Mammary epithelial cell (primary cell): ENCODE measurements at regions of chrX and their contacts with region 1.

Region 1: DNA sequence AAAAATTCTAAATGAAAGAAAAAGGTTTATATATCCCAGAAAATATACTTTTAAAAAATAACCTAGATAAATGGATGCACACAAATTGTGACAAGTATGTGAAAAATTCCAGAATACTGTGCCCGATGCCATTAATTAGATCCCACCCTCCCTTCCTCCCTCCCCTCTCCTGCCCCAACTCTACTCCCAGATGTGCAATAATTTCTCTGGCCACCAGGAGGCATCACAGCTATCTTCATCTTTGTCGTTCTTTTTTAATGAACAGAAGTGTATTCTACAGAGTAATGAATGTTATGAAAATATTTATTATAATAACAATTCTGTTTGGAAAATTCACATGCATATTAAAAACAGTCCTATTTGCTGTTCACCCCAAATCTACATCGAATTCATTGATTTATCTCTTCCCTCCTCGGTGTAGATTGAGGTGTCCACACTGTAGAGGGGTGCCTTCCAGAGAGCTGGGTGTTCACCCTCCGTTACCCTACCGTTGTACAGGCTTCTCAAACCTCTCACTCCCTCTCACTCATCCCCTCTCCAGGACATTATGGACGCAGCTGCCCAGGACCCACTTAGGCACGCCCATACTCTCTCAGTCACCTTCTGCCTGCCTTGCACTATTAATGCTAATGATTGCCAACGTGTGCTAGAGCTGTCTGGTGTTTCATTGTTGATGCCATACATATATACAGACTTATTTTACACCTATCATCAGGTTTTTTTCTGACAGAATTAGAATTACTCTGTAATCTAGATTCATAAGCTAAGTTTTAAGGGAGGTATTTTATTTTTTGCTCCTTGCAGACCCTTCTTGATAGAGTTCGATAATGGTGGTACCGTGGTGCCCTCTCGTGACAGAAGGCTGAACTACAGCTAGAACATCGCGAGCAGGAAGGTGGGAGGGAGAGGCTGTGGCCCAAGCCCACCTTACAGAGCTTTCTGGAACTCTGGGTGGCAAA is 14.1 kb downstream of the RAB40AL start:
- DNase-seq: peak; percentile 26
- H3K4me3 ChIP-seq: peak overlapping the region; percentile 2 to 11 (median 4)
- H3K27ac ChIP-seq: no peak overlapping the region
- H3K4me1 ChIP-seq: peaks cover 6% of the 10 kb centered on the region
- H3K27me3 ChIP-seq: no peaks in the 10 kb centered on the region
- CTCF ChIP-seq: peak; percentile 59 to 72

Region 2: DNA sequence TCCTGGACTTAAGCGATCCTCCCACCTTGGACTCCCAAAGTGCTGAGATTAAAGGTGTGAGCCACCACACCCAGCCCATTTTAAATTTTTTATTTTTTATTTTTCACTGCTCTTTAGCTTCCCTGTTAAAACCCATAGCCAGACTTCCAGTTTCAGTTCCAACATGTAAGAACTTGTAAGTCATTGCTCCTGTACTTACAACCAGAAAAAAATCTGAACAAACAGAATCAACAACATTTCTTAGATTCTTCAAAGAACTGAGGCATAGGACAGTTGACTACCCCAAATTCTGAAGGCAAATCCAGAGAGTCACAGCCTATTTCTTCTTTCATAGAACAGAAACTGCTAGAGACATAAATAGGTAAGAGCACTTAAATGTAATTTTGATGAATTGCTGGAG is 222.5 kb before region 1 on chrX:
- CTCF ChIA-PET with region 1: no interaction called
- dilution Hi-C with region 1: no loop called
- in situ Hi-C with region 1: no loop called
- intact Hi-C with region 1: no loop called
- DNase-seq: peak; percentile 23
- H3K4me3 ChIP-seq: no peak overlapping the region
- H3K27ac ChIP-seq: peak overlapping the region; percentile 22
- H3K4me1 ChIP-seq: no peaks in the 10 kb centered on the region
- H3K27me3 ChIP-seq: no peaks in the 10 kb centered on the region
- CTCF ChIP-seq: no peak

Region 3: DNA sequence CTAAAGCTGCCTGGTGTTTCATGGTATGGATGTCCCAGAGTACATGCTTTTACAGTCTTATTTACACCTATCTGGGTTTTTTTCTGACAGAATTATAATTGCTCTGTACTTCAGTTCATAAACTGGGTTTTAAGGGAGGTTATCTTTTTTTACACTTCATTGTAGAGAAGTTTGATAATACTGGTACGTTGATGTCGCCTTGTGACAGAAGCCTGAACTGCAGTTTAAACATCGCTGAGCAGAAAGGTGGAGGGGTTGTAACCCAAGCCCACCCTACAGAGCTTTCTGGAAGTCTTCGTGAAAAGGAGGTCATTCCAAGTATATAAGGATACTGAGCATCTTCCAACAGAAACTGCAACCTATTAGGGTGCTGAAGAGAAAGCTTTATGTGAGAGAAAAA is 66.4 kb after region 1 on chrX:
- CTCF ChIA-PET with region 1: no interaction called
- dilution Hi-C with region 1: no loop called
- in situ Hi-C with region 1: no loop called
- intact Hi-C with region 1: loop called (anchors 2 kb)
- DNase-seq: no peak
- H3K4me3 ChIP-seq: no peak overlapping the region
- H3K27ac ChIP-seq: no peak overlapping the region
- H3K4me1 ChIP-seq: no peaks in the 10 kb centered on the region
- H3K27me3 ChIP-seq: peaks cover 3% of the 10 kb centered on the region
- CTCF ChIP-seq: peak; percentile 9 to 32

Region 4: GRCh38 chrX:103092942-103093341 is 141.8 kb after region 1 on chrX and contains the start of gene NXF3:
- CTCF ChIA-PET with region 1: no interaction called
- dilution Hi-C with region 1: no loop called
- in situ Hi-C with region 1: no loop called
- intact Hi-C with region 1: no loop called
- DNase-seq: no peak
- H3K4me3 ChIP-seq: no peak within 1 kb of the TSS
- H3K27ac ChIP-seq: no peak within 1 kb of the TSS
- H3K4me1 ChIP-seq: no peaks in the 10 kb centered on the region
- H3K27me3 ChIP-seq: no peaks in the 10 kb centered on the region
- CTCF ChIP-seq: no peak
- total RNA-seq, gene NXF3: 0.17 TPM in 1 of 2 donors, not detected in the other

Region 5: DNA sequence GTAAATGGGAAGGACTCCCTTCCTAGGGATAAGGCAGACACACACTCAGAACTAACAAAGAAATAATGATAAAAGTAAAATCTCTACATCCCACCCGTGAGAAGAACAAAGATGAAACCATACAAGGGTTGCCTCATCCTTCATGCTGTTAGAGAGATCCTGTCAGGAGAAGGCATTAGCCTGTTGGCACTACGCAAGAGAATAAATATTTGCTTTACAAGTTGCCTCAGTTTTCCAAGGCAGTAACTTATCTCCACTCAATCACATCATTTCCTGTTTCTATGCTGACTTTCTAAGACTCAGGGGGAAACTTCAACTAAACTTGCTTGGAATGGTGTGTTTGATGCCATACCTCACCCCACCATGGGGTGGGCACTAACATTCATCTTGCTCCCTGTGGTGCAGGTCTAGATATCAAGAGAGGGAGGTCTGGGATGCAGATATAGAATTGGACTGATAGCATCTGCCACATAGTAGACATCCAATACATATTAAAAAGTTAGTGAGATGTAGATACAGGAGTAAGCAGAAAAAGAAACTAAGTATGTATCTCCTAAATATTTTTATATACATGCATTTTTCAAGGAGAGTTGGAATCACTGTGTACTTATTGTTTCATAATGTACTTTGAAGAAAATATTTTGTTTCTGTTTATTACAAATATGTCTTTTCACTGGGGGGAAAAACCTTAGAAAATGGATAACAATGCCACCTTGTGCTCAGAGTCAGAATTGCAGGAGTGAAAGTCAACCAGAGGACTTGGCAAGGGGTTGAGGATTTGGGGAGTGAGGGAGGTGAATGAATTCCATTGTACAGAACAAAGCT is 206.5 kb after region 1 on chrX:
- CTCF ChIA-PET with region 1: interaction called, 4 read pairs
- dilution Hi-C with region 1: loop called (anchors 25 kb)
- in situ Hi-C with region 1: no loop called
- intact Hi-C with region 1: loop called (anchors 1 kb)
- DNase-seq: peak; percentile 22
- H3K4me3 ChIP-seq: no peak overlapping the region
- H3K27ac ChIP-seq: no peak overlapping the region
- H3K4me1 ChIP-seq: peaks cover 13% of the 10 kb centered on the region
- H3K27me3 ChIP-seq: no peaks in the 10 kb centered on the region
- CTCF ChIP-seq: peak; percentile 71 to 82

Region 6: GRCh38 chrX:103175944-103176753 is 225.0 kb after region 1 on chrX:
- CTCF ChIA-PET with region 1: interaction called, 7 read pairs
- dilution Hi-C with region 1: loop called (anchors 25 kb)
- in situ Hi-C with region 1: loop called in 1 of 2 experiments (anchors 10 kb)
- intact Hi-C with region 1: loop called (anchors 1 kb)
- DNase-seq: peak; percentile 23
- H3K4me3 ChIP-seq: peak overlapping the region in 2 of 3 experiments; percentile 19 to 20
- H3K27ac ChIP-seq: no peak overlapping the region
- H3K4me1 ChIP-seq: no peaks in the 10 kb centered on the region
- H3K27me3 ChIP-seq: no peaks in the 10 kb centered on the region
- CTCF ChIP-seq: peak; percentile 82 to 95